WTC11 (cell line): ENCODE measurements at regions of chr6 and their contacts with region 1.

Region 1: DNA sequence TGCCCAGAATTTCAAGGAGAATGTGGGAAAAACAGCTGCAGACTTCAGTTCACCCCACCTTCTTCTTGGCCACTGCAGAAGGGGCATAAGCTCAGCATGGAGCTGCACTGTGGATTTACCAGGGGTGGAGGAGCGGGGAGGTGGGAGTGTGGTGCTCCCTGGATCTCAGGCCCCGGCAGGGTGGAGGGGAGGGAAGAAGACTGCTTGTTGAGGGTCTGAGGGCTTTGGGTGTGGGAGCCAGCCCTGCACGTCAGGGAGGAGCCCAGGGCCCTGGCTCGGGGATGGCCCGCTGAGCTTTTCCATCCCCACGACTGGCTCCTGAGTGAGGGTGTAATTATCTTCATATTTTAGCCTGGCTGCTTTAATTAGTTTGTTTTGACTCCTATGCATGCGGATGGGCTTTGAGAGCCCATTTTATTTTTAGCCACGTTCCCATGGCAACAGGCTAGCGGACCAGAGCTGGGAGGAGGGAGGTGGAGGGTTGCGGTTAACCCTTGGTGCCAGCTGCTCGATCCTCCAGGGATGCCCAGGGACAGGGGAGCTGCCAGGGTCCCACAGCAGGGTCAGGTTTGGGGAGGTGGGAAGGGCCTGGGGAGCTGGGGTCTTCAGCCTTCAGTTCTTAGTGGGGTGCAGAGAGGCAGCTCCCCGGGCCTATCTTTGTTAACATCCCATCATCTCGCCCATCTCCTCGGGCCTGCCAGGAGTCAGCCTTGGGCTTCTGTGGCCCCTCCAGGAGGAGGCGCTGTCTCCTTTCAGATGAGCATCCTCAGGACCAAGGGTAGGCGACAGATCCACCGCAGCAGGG is 68.2 kb downstream of the RAB44 start:
- DNase-seq: peak; percentile 91
- ATAC-seq: peak; percentile 93
- H3K4me3 Mint-ChIP-seq: no peak overlapping the region
- H3K27ac Mint-ChIP-seq: no peak overlapping the region
- H3K4me1 Mint-ChIP-seq: peaks cover 17% of the 10 kb centered on the region
- H3K27me3 Mint-ChIP-seq: no peaks in the 10 kb centered on the region
- CTCF ChIP-seq: peak; percentile 91

Region 2: GRCh38 chr6:36615018-36615761 is 150.6 kb before region 1 on chr6:
- CTCF ChIA-PET with region 1: interaction called, 16 read pairs
- POLR2A ChIA-PET with region 1: no interaction called
- DNase-seq: peak; percentile 33
- ATAC-seq: peak; percentile 43
- H3K4me3 Mint-ChIP-seq: no peak overlapping the region
- H3K27ac Mint-ChIP-seq: peak overlapping the region; percentile 74; the same call in 1 of the 2 replicates
- H3K4me1 Mint-ChIP-seq: peaks cover 10% of the 10 kb centered on the region; the same call in 1 of the 2 replicates
- H3K27me3 Mint-ChIP-seq: no peaks in the 10 kb centered on the region
- CTCF ChIP-seq: peak; percentile 74

Region 3: DNA sequence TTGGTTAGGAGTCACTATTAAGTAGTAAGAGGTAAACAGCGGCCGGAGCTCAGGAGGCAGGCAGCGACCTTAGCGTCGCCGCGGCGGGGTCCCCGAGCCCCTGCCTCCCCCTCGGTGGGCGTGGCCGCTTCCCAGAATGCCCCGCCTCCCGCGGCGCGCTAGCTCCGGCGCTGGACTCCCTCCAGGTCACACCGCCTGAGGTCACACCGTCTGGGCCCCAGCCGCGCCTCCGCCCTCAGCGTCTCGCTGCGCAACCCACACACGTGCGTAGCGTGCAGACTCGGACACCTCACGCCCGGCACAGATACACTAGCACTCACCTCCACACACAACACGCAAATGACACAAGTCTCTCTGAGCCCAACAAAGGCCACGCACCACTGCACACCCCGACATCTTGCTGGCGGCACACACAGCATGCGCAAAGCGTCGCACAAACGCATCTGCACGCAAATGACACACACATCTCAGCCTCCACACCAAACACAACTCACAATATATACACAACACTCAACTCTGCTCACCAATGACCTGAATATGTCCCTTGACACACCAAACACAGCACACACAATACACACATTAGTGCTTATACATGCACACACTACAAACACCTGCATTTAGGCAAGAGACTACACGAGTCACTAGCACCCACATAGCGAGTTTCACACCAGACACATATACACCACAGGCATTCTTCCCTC is 104.9 kb before region 1 on chr6:
- CTCF ChIA-PET with region 1: no interaction called
- POLR2A ChIA-PET with region 1: no interaction called
- DNase-seq: peak; percentile 84
- ATAC-seq: peak; percentile 91
- H3K4me3 Mint-ChIP-seq: peak overlapping the region; percentile 36
- H3K27ac Mint-ChIP-seq: no peak overlapping the region
- H3K4me1 Mint-ChIP-seq: peaks cover 30% of the 10 kb centered on the region
- H3K27me3 Mint-ChIP-seq: 0 out of 2 replicates have a peak, but pooled peaks cover 3% of the 10 kb centered on the region
- CTCF ChIP-seq: no peak

Region 4: DNA sequence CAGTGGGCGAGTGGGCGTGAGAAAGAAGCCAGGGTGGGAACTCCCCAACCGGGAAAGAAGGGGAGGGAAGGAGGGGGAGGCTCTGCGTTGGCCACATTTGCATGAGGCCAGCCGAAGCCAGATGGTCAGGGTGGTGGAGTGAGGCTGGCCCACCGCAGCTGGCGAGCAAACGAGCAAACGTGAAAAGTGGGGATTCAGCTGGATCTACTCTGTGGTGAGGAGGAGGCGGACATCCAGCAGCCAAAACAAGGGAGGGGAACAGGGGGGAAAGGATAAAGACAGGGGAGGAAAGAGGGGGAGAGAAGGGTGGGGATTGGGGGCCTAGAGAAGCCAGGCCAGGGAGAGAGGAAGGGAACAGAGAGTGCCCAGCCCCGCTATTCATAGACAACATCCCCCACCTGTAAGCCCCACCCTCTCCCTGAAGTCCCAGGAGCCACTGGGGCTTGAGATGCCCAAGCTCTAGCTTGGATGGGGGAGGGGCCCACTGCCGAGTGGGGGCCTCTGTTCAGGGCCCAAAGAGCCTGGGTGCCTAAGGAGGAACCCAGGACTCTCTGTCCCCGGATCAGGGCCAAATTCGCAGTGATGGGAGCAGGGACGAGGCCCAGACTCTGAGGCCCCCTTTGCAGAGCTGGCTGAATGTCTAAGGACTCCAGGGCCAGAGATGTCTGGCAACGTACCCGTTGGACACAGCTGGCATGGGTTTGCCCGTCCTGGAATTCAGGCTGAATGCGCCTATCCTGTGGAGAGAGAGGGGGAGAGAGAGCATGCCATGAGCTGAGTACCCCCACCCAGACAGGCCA is 28.3 kb after region 1 on chr6:
- CTCF ChIA-PET with region 1: interaction called, 454 read pairs
- POLR2A ChIA-PET with region 1: no interaction called
- DNase-seq: no peak
- ATAC-seq: peak; percentile 69
- H3K4me3 Mint-ChIP-seq: peak overlapping the region; percentile 25; the same call in 1 of the 2 replicates
- H3K27ac Mint-ChIP-seq: peak overlapping the region; percentile 37; the same call in 1 of the 2 replicates
- H3K4me1 Mint-ChIP-seq: peaks cover 40% of the 10 kb centered on the region
- H3K27me3 Mint-ChIP-seq: no peaks in the 10 kb centered on the region
- CTCF ChIP-seq: no peak

Region 5: GRCh38 chr6:36836111-36837021 is 70.6 kb after region 1 on chr6:
- CTCF ChIA-PET with region 1: interaction called, 22 read pairs
- POLR2A ChIA-PET with region 1: no interaction called
- DNase-seq: no peak
- ATAC-seq: no peak
- H3K4me3 Mint-ChIP-seq: no peak overlapping the region
- H3K27ac Mint-ChIP-seq: no peak overlapping the region
- H3K4me1 Mint-ChIP-seq: peaks cover 17% of the 10 kb centered on the region
- H3K27me3 Mint-ChIP-seq: peaks cover 60% of the 10 kb centered on the region
- CTCF ChIP-seq: no peak

Region 6: DNA sequence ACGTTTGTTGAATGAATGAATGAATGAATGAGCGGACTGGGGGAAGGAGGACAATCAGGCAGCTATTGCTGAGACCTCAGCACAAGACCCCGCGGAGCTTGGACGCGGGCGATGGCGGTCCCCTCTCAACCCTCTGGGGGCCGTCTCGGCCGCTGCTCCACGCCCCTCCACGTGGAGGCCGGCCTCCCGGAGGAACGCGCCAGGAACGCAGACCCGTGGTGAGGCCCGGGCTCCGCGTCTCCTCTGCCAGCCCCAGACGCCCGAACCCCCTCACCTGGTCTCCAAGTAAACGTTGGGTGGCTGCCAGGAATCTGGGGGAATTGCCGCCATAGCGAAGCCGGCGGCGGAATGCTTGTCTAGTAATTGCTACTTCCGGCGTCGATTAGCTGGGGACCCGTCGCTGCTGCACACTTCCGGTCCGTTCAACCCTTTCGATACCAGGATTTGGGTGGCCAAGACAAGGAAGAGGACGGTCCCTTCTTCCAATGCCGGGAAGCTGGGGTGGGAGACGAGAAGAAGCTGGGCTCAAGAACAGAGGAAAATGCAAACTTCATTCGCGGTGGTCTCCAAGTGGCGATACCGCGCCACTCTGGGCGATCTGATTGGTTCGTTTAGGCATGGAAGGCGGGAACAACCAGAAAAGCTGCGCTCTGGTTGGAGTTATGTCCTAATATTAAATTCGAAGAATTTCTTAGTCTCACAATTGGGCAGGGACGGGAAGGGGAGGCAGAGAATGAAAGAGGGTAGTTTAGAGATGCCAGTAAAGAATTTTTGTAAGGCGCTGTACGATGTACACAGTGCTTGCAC is 108.8 kb after region 1 on chr6 and contains the start of gene PPIL1:
- CTCF ChIA-PET with region 1: interaction called, 20 read pairs
- POLR2A ChIA-PET with region 1: no interaction called
- DNase-seq: peak; percentile 74
- ATAC-seq: peak; percentile 87
- H3K4me3 Mint-ChIP-seq: peak within 1 kb of the TSS; percentile 93
- H3K27ac Mint-ChIP-seq: peak within 1 kb of the TSS; percentile 100
- H3K4me1 Mint-ChIP-seq: peaks cover 19% of the 10 kb centered on the region
- H3K27me3 Mint-ChIP-seq: peaks cover 17% of the 10 kb centered on the region
- CTCF ChIP-seq: no peak
- total RNA-seq, gene PPIL1: 64.2 to 69.8 TPM (median 66.6 TPM) in 3 replicates

Region 7: GRCh38 chr6:36912586-36912985 is 146.8 kb after region 1 on chr6:
- CTCF ChIA-PET with region 1: interaction called, 28 read pairs
- POLR2A ChIA-PET with region 1: no interaction called
- DNase-seq: no peak
- ATAC-seq: no peak
- H3K4me3 Mint-ChIP-seq: no peak overlapping the region
- H3K27ac Mint-ChIP-seq: no peak overlapping the region
- H3K4me1 Mint-ChIP-seq: peaks cover 5% of the 10 kb centered on the region
- H3K27me3 Mint-ChIP-seq: no peaks in the 10 kb centered on the region
- CTCF ChIP-seq: no peak